B cell (primary cell): ENCODE measurements at regions of chr4 and their contacts with region 1.

Region 1: DNA sequence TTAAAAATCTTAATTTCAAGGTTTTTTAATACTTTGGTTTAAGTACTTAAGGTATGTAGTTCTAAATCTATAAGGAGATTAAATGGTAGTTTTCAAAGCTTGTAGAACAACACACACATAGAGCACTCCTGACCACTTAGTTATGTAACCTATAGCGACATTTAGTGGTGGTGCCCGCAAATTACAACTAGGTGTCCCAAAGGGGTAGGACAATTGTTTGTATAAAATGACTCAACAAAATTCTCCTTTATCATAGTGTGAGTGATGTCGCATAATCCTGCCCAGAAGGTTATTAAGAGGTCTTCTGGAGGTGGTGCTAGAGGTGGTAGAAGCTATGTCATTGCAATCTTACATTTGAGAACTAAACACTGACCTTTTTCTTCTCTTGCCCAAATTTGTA is 373.0 kb upstream of the RASGEF1B start:
- DNase-seq: peak; percentile 83
- ATAC-seq: peak; percentile 96
- H3K4me3 ChIP-seq: no peak overlapping the region
- H3K4me3 Mint-ChIP-seq: no peak overlapping the region
- H3K27ac ChIP-seq: no peak overlapping the region
- H3K27ac Mint-ChIP-seq: no peak overlapping the region
- H3K4me1 ChIP-seq: peaks cover 0 to 2% of the 10 kb centered on the region in 2 donors
- H3K4me1 Mint-ChIP-seq: peaks cover 5% of the 10 kb centered on the region
- H3K27me3 ChIP-seq: no peaks in the 10 kb centered on the region
- H3K27me3 Mint-ChIP-seq: no peaks in the 10 kb centered on the region
- CTCF ChIP-seq: peak; percentile 87

Region 2: GRCh38 chr4:81405894-81406401 is 438.8 kb before region 1 on chr4:
- CTCF ChIA-PET with region 1: interaction called, 45 read pairs
- POLR2A ChIA-PET with region 1: no interaction called
- intact Hi-C with region 1: loop called (anchors 1 kb)
- DNase-seq: peak; percentile 85
- ATAC-seq: peak; percentile 85
- H3K4me3 ChIP-seq: peak overlapping the region in 1 of 5 experiments; percentile 12
- H3K4me3 Mint-ChIP-seq: no peak overlapping the region
- H3K27ac ChIP-seq: no peak overlapping the region
- H3K27ac Mint-ChIP-seq: no peak overlapping the region
- H3K4me1 ChIP-seq: no peaks in the 10 kb centered on the region
- H3K4me1 Mint-ChIP-seq: peaks cover 3% of the 10 kb centered on the region
- H3K27me3 ChIP-seq: no peaks in the 10 kb centered on the region
- H3K27me3 Mint-ChIP-seq: no peaks in the 10 kb centered on the region
- CTCF ChIP-seq: peak; percentile 99

Region 3: GRCh38 chr4:81445196-81445595 is 399.5 kb before region 1 on chr4:
- CTCF ChIA-PET with region 1: interaction called, 14 read pairs
- POLR2A ChIA-PET with region 1: no interaction called
- intact Hi-C with region 1: no loop called
- DNase-seq: no peak
- ATAC-seq: no peak
- H3K4me3 ChIP-seq: no peak overlapping the region
- H3K4me3 Mint-ChIP-seq: no peak overlapping the region
- H3K27ac ChIP-seq: no peak overlapping the region
- H3K27ac Mint-ChIP-seq: no peak overlapping the region
- H3K4me1 ChIP-seq: no peaks in the 10 kb centered on the region
- H3K4me1 Mint-ChIP-seq: no peaks in the 10 kb centered on the region
- H3K27me3 ChIP-seq: no peaks in the 10 kb centered on the region
- H3K27me3 Mint-ChIP-seq: no peaks in the 10 kb centered on the region
- CTCF ChIP-seq: no peak

Region 4: DNA sequence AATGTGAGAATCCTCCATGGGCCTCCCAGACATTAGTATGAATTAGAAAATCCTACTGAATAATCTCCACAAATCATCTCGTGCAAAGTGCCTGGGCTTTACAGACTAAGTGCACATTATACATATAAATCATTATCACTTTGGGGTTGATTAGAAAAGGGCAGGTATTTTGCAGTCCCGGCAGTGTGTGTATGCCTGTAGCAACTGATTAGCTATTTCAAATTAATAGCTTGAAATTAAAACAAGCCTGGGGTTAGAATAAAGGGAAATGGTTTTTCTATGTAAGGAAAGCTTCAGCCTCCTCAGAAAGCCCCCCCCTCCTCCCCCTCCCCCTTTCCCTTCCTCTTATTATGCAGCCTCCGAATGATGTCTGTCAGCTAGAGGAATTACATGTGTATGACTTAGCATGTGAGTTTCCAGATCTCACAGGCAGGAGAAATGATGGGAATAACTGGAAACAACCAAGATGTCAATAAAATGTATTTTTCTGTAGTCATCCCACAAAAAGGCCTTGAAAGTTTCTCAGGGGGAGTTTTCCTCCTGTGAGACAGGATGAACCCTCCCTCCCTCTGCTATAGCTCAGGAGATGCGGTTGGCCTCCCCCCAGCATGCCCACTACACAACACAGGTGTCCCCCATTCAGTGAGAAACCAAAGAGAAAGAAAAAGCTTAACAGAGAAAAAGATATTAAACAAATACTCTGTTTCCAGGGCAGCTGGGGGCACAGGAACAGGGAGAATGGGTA is 331.8 kb before region 1 on chr4:
- CTCF ChIA-PET with region 1: interaction called, 3 read pairs
- POLR2A ChIA-PET with region 1: no interaction called
- intact Hi-C with region 1: loop called (anchors 5 kb)
- DNase-seq: peak; percentile 66
- ATAC-seq: peak; percentile 70
- H3K4me3 ChIP-seq: no peak overlapping the region
- H3K4me3 Mint-ChIP-seq: peak overlapping the region; percentile 40
- H3K27ac ChIP-seq: peak overlapping the region; percentile 65 to 78
- H3K27ac Mint-ChIP-seq: peak overlapping the region; percentile 56
- H3K4me1 ChIP-seq: peaks cover 34 to 59% of the 10 kb centered on the region in 2 donors
- H3K4me1 Mint-ChIP-seq: peaks cover 65% of the 10 kb centered on the region
- H3K27me3 ChIP-seq: no peaks in the 10 kb centered on the region
- H3K27me3 Mint-ChIP-seq: no peaks in the 10 kb centered on the region
- CTCF ChIP-seq: no peak

Region 5: DNA sequence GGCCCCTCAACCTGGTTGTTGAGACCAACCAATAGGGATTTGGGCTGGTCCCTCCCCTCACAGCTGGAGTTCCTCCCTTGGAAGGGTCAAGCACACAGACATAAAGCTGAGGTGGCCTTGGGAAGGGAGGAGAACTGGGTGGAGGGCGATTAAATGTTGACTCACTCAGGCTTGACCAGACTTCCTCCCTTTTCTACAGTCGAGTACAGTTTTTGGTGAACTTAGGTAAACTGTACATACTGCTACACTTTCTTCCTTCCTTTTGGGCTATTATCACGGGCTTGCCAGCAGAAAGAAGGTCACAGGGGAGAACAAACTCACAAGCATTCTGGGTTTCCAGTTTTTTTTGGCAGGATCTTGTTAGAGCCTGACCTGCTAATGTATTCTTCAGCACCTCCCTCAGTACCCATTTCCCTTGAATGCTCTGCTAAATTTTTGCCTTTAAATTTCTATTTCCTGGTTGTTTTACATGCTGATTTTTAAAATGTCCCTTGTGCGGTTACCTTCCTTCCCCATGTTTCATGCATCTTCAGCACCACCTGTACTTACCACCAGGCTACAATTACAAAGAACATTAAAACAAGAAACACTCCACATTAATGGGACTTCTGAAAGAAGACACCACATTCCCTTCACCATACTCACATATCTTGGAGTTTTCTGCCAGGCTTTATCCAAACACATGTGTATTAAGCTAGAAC is 237.8 kb before region 1 on chr4:
- CTCF ChIA-PET with region 1: interaction called, 3 read pairs
- POLR2A ChIA-PET with region 1: no interaction called
- intact Hi-C with region 1: loop called (anchors 5 kb)
- DNase-seq: peak; percentile 79
- ATAC-seq: peak; percentile 51
- H3K4me3 ChIP-seq: peak overlapping the region in 4 of 5 experiments; percentile 21 to 40 (median 34)
- H3K4me3 Mint-ChIP-seq: peak overlapping the region; percentile 69
- H3K27ac ChIP-seq: peak overlapping the region; percentile 73 to 89
- H3K27ac Mint-ChIP-seq: peak overlapping the region; percentile 84
- H3K4me1 ChIP-seq: peaks cover 61 to 67% of the 10 kb centered on the region in 2 donors
- H3K4me1 Mint-ChIP-seq: peaks cover 58% of the 10 kb centered on the region
- H3K27me3 ChIP-seq: no peaks in the 10 kb centered on the region
- H3K27me3 Mint-ChIP-seq: no peaks in the 10 kb centered on the region
- CTCF ChIP-seq: peak; percentile 47

Region 6: DNA sequence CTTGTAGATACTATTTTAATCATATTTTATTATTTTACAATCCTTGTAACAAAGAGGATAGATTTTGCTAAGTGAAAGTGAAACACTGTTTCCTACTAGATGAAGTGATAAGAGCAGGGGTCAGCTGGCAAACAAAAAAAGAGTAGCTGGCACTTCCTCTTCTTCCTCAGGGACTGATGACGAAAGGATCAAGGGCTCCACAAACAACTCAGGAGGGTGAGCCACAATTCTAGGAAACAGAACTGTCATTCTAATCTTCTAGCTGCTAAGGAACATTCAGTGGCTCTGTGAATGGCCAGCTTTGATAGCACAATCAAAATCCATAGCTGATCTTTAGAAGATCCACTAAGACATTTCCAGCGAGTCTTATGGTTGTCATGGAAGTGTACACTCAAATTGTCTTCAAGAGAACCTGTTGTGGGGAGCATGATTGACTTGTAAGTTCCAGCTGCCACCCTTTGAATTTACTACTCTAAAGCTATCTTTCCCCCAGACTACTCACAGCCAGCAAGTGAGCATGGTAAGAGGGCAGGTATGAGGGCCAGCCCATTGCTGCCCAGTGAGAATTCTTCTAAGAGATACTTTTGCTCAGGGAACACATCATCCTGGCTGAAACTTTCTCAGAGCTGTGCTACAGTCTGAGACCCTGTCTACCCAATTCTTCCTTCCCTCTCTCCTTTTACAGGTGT is 97.3 kb before region 1 on chr4:
- CTCF ChIA-PET with region 1: no interaction called
- POLR2A ChIA-PET with region 1: no interaction called
- intact Hi-C with region 1: no loop called
- DNase-seq: peak; percentile 31
- ATAC-seq: peak; percentile 10
- H3K4me3 ChIP-seq: no peak overlapping the region
- H3K4me3 Mint-ChIP-seq: peak overlapping the region; percentile 3
- H3K27ac ChIP-seq: no peak overlapping the region
- H3K27ac Mint-ChIP-seq: peak overlapping the region; percentile 68
- H3K4me1 ChIP-seq: peaks cover 3 to 5% of the 10 kb centered on the region in 2 donors
- H3K4me1 Mint-ChIP-seq: peaks cover 7% of the 10 kb centered on the region
- H3K27me3 ChIP-seq: no peaks in the 10 kb centered on the region
- H3K27me3 Mint-ChIP-seq: no peaks in the 10 kb centered on the region
- CTCF ChIP-seq: no peak

Region 7: GRCh38 chr4:82268050-82268825 is 423.5 kb after region 1 on chr4:
- CTCF ChIA-PET with region 1: interaction called, 15 read pairs
- POLR2A ChIA-PET with region 1: no interaction called
- intact Hi-C with region 1: no loop called
- DNase-seq: peak; percentile 65
- ATAC-seq: peak; percentile 88
- H3K4me3 ChIP-seq: no peak overlapping the region
- H3K4me3 Mint-ChIP-seq: no peak overlapping the region
- H3K27ac ChIP-seq: no peak overlapping the region
- H3K27ac Mint-ChIP-seq: no peak overlapping the region
- H3K4me1 ChIP-seq: peaks cover 29 to 34% of the 10 kb centered on the region in 2 donors
- H3K4me1 Mint-ChIP-seq: peaks cover 34% of the 10 kb centered on the region
- H3K27me3 ChIP-seq: no peaks in the 10 kb centered on the region
- H3K27me3 Mint-ChIP-seq: peaks cover 4% of the 10 kb centered on the region
- CTCF ChIP-seq: peak; percentile 74